GM12878 (cell line): ENCODE measurements at regions of chr9 and their contacts with region 1.

Region 1: DNA sequence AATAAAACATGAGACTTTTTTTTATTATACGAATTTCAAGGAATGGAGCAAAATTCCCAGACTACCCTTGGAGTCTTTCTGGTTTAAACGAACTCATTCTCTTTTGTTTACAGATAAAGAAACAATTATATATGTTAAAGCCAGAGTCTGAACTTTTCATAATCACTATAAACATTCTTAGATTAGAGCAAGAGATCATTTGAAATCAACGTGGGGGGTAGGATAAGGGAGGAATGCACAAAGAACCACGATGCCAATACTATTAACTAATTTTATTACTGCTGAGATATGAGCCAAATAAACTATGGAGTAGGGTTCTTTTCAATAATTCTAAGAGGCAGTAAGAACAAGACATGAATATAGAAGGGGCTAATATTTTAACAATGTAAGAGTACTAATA is 148.0 kb upstream of the FREM1 start:
- DNase-seq: no peak
- ATAC-seq: no peak
- H3K4me3 ChIP-seq: no peak overlapping the region
- H3K27ac ChIP-seq: no peak overlapping the region
- H3K4me1 ChIP-seq: no peaks in the 10 kb centered on the region
- H3K27me3 ChIP-seq: no peaks in the 10 kb centered on the region
- CTCF ChIP-seq: no peak
- EP300 ChIP-seq: no peak
- POLR2A ChIP-seq: no peak
- RAD21 ChIP-seq: no peak

Region 2: GRCh38 chr9:14880951-14881465 is 177.2 kb before region 1 on chr9:
- CTCF ChIA-PET with region 1: no interaction called
- POLR2A ChIA-PET with region 1: no interaction called
- RAD21 ChIA-PET with region 1: no interaction called
- SMC1A ChIA-PET with region 1: no interaction called
- in situ Hi-C with region 1: no loop called
- intact Hi-C with region 1: no loop called
- DNase-seq: no peak
- ATAC-seq: no peak
- H3K4me3 ChIP-seq: no peak overlapping the region
- H3K27ac ChIP-seq: no peak overlapping the region
- H3K4me1 ChIP-seq: no peaks in the 10 kb centered on the region
- H3K27me3 ChIP-seq: no peaks in the 10 kb centered on the region
- CTCF ChIP-seq: no peak
- EP300 ChIP-seq: no peak
- POLR2A ChIP-seq: no peak
- RAD21 ChIP-seq: no peak

Region 3: GRCh38 chr9:14993061-14993800 is 65.0 kb before region 1 on chr9:
- CTCF ChIA-PET with region 1: no interaction called
- POLR2A ChIA-PET with region 1: no interaction called
- RAD21 ChIA-PET with region 1: no interaction called
- SMC1A ChIA-PET with region 1: no interaction called
- in situ Hi-C with region 1: no loop called
- intact Hi-C with region 1: no loop called
- DNase-seq: no peak
- ATAC-seq: no peak
- H3K4me3 ChIP-seq: no peak overlapping the region
- H3K27ac ChIP-seq: no peak overlapping the region
- H3K4me1 ChIP-seq: no peaks in the 10 kb centered on the region
- H3K27me3 ChIP-seq: no peaks in the 10 kb centered on the region
- CTCF ChIP-seq: no peak
- EP300 ChIP-seq: no peak
- POLR2A ChIP-seq: no peak
- RAD21 ChIP-seq: no peak

Region 4: DNA sequence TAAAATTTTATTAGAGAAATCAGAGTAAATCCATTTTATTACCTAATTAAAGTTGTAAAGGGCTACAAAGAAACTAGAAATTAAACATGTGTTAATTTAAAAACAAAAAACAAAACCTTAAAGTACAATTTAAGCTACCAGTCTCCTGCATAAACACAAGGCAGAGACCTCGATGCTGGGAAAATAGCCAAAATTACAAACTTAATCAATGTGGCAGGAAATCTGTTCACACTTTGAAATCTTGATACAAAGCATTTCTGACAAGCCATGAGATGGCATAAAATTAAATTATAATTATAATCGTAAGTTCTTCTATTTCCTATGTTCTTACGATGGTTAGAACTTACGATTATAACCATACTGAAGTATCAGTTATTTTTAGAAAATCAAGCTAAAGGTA is 10.0 kb after region 1 on chr9:
- CTCF ChIA-PET with region 1: no interaction called
- POLR2A ChIA-PET with region 1: no interaction called
- RAD21 ChIA-PET with region 1: no interaction called
- SMC1A ChIA-PET with region 1: no interaction called
- in situ Hi-C with region 1: no loop called
- intact Hi-C with region 1: loop called (anchors 1 kb)
- DNase-seq: no peak
- ATAC-seq: no peak
- H3K4me3 ChIP-seq: no peak overlapping the region
- H3K27ac ChIP-seq: no peak overlapping the region
- H3K4me1 ChIP-seq: no peaks in the 10 kb centered on the region
- H3K27me3 ChIP-seq: no peaks in the 10 kb centered on the region
- CTCF ChIP-seq: no peak
- EP300 ChIP-seq: no peak
- POLR2A ChIP-seq: no peak
- RAD21 ChIP-seq: no peak

Region 5: DNA sequence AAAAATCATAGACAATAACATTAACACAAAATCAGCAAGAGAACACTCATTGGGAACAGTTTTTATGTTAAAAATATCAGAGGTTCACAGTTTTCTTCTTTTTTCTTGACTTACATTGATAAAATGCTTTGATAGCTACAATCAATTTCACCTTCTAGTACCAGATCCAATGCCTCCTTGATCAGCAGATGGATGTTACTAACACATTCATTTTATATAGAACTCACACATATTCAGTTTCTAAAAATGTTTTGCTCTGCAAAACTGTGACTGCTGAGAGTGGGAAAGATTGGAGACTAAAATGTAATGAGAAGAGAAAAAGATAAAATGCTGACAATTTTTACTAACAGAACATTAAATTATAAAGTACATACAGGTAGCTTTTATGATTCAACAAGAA is 105.7 kb after region 1 on chr9:
- CTCF ChIA-PET with region 1: no interaction called
- POLR2A ChIA-PET with region 1: no interaction called
- RAD21 ChIA-PET with region 1: no interaction called
- SMC1A ChIA-PET with region 1: no interaction called
- in situ Hi-C with region 1: no loop called
- intact Hi-C with region 1: no loop called
- DNase-seq: no peak
- ATAC-seq: no peak
- H3K4me3 ChIP-seq: no peak overlapping the region
- H3K27ac ChIP-seq: no peak overlapping the region
- H3K4me1 ChIP-seq: no peaks in the 10 kb centered on the region
- H3K27me3 ChIP-seq: no peaks in the 10 kb centered on the region; a peak in 1 of 4 replicates
- CTCF ChIP-seq: no peak
- EP300 ChIP-seq: no peak
- POLR2A ChIP-seq: no peak
- RAD21 ChIP-seq: no peak